K562 (cell line): ENCODE measurements at regions of chr9 and their contacts with region 1.

Region 1: GRCh38 chr9:127214421-127215267 is 49.9 kb upstream of the GARNL3 start:
- DNase-seq: peak; percentile 71 to 77 (median 74)
- ATAC-seq: peak; percentile 89
- H3K4me3 ChIP-seq: no peak overlapping the region
- H3K27ac ChIP-seq: no peak overlapping the region
- H3K4me1 ChIP-seq: peaks cover 7 to 14% of the 10 kb centered on the region in 2 experiments; a peak in 4 of 5 replicates
- H3K27me3 ChIP-seq: peaks cover 27 to 81% of the 10 kb centered on the region in 2 experiments
- CTCF ChIP-seq: peak; percentile 81 to 87 (median 84)
- EP300 ChIP-seq: no peak
- POLR2A ChIP-seq: no peak
- RAD21 ChIP-seq: peak; percentile 69 to 78

Region 2: DNA sequence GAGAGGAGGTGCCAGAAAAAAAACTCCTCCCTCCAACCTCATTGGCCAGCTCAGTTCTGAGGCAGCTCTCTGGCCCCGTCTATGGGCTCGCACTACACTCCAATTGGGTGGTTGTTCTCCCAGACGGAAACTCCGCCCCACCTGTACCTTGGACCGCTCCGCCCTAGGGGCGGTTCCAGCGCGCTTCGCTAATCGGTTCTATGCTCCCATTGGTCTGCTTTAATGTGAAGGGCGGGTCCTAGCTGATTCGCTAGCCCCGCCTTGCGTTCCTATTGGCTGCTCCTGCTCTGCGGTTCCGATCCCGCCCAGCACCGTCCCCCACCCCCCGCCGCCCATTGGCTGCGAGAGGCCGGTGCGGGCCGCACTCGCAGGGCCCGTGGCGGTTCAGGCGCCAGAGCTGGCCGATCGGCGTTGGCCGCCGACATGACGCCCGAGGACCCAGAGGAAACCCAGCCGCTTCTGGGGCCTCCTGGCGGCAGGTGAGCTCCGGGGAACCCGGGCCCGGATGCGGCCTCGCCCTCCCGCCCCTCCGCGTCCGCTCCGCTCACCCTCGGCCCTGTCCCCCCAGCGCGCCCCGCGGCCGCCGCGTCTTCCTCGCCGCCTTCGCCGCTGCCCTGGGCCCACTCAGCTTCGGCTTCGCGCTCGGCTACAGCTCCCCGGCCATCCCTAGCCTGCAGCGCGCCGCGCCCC is 182.3 kb after region 1 on chr9 and contains the start of gene SLC2A8:
- CTCF ChIA-PET with region 1: no interaction called
- POLR2A ChIA-PET with region 1: interaction called, 3 read pairs
- in situ Hi-C with region 1: no loop called
- intact Hi-C with region 1: loop called (anchors 5 kb)
- DNase-seq: peak; percentile 98 to 99 (median 99)
- ATAC-seq: peak; percentile 97
- H3K4me3 ChIP-seq: peak within 1 kb of the TSS; percentile 66
- H3K27ac ChIP-seq: peak within 1 kb of the TSS; percentile 64; the same call in 2 of the 3 replicates
- H3K4me1 ChIP-seq: peaks cover 17 to 25% of the 10 kb centered on the region in 2 experiments; a peak in 3 of 5 replicates
- H3K27me3 ChIP-seq: no peaks in the 10 kb centered on the region; a peak in 1 of 5 replicates
- CTCF ChIP-seq: peak in 1 of 3 experiments; percentile 37; a peak in 1 of 6 replicates
- EP300 ChIP-seq: no peak
- POLR2A ChIP-seq: peak; percentile 68; the same call in 1 of the 2 replicates
- RAD21 ChIP-seq: no peak
- polyA plus RNA-seq, gene SLC2A8: 0.13 to 1.1 TPM

Region 3: DNA sequence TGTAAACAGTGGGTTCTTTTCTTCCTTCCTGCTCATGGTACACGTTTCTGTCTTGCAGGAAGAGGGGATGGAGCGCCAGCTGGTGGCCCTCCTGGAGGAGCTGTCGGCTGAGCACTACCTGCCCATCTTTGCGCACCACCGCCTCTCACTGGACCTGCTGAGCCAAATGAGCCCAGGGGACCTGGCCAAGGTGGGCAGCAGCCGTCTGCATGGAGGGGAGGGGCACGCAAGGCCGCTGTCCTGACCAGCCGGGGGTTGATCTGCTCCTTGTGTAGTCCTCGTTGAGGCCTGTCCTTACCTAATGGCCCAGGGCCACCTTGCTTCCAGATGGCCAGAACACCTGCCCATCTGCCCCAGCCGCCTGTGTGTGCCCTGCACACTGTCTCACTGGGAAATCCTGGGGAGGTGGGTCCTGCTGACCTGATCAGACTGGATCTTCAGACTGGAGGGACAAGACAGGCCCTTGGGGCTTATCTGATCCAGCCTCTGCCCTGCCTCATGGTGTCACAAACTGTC is 281.3 kb after region 1 on chr9:
- CTCF ChIA-PET with region 1: no interaction called
- POLR2A ChIA-PET with region 1: no interaction called
- in situ Hi-C with region 1: no loop called
- intact Hi-C with region 1: loop called (anchors 5 kb)
- DNase-seq: no peak
- ATAC-seq: peak; percentile 58; the same call in 2 of the 3 replicates
- H3K4me3 ChIP-seq: no peak overlapping the region
- H3K27ac ChIP-seq: no peak overlapping the region
- H3K4me1 ChIP-seq: peaks cover 6 to 28% of the 10 kb centered on the region in 2 experiments; a peak in 4 of 5 replicates
- H3K27me3 ChIP-seq: no peaks in the 10 kb centered on the region
- CTCF ChIP-seq: peak; percentile 34 to 49 (median 47); a peak in 5 of 6 replicates
- EP300 ChIP-seq: no peak
- POLR2A ChIP-seq: no peak
- RAD21 ChIP-seq: peak in 1 of 2 experiments; percentile 54; a peak in 2 of 4 replicates